Heart right ventricle (tissue), 16 donors: ENCODE measurements at regions of chr7 and their contacts with region 1.

Region 1: DNA sequence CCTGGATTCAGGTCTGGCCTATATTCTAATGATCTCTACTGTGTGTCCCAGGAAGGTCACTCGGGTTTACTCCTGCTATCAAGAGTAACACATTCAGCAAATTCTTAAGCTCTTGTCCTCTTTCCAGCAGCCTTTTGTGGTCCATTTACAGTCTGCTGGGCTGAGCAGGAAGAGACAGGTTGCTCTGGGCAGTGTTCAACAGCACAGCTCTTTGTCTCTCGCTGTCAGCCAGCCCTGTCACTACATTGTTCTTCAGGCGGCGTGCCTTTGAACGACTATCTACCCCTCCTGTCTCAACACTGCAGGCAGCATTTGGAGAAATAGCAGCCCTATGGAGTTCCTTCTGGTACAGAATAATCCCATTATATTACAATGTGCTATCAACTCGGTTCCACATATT is 192.2 kb upstream of the TBX20 start:
- DNase-seq: peak; percentile 21 to 49
- ATAC-seq: peak; percentile 83 to 97 (median 90)
- H3K4me3 ChIP-seq: no peak overlapping the region
- H3K27ac ChIP-seq: peak overlapping the region in 4 of 10 donors; percentile 1 to 41 (median 20)
- H3K4me1 ChIP-seq: peaks cover 0 to 9% (median 3%) of the 10 kb centered on the region in 9 donors
- H3K27me3 ChIP-seq: no peaks in the 10 kb centered on the region
- CTCF ChIP-seq: no peak

Region 2: GRCh38 chr7:35465791-35466336 is 19.8 kb after region 1 on chr7:
- intact Hi-C with region 1: loop called in 1 of 10 experiments (anchors 2 kb)
- DNase-seq: peak; percentile 76 to 83
- ATAC-seq: peak; percentile 83 to 95 (median 93)
- H3K4me3 ChIP-seq: peak overlapping the region in 1 of 10 donors; percentile 7
- H3K27ac ChIP-seq: peak overlapping the region; percentile 29 to 90 (median 76)
- H3K4me1 ChIP-seq: peaks cover 0 to 21% (median 4%) of the 10 kb centered on the region in 9 donors
- H3K27me3 ChIP-seq: no peaks in the 10 kb centered on the region
- CTCF ChIP-seq: no peak